GM12878 (cell line): ENCODE measurements at regions of chr1 and their contacts with region 1.

Region 1: GRCh38 chr1:150561974-150562445 is 12.8 kb downstream of the ADAMTSL4 start:
- DNase-seq: no peak
- ATAC-seq: peak; percentile 64
- H3K4me3 ChIP-seq: peak overlapping the region; percentile 80
- H3K27ac ChIP-seq: peak overlapping the region; percentile 98
- H3K4me1 ChIP-seq: peaks cover 42% of the 10 kb centered on the region
- H3K27me3 ChIP-seq: no peaks in the 10 kb centered on the region
- CTCF ChIP-seq: no peak
- EP300 ChIP-seq: no peak
- POLR2A ChIP-seq: peak; percentile 31
- RAD21 ChIP-seq: no peak

Region 2: GRCh38 chr1:150259758-150260669 is 302.0 kb before region 1 on chr1:
- CTCF ChIA-PET with region 1: interaction called, 15 read pairs
- POLR2A ChIA-PET with region 1: interaction called, 6 read pairs
- RAD21 ChIA-PET with region 1: interaction called, 3 read pairs
- SMC1A ChIA-PET with region 1: no interaction called
- in situ Hi-C with region 1: no loop called
- intact Hi-C with region 1: no loop called
- DNase-seq: no peak
- ATAC-seq: no peak
- H3K4me3 ChIP-seq: no peak overlapping the region
- H3K27ac ChIP-seq: no peak overlapping the region
- H3K4me1 ChIP-seq: peaks cover 5% of the 10 kb centered on the region; the same call in 1 of the 2 replicates
- H3K27me3 ChIP-seq: no peaks in the 10 kb centered on the region; a peak in 2 of 4 replicates
- CTCF ChIP-seq: no peak
- EP300 ChIP-seq: no peak
- POLR2A ChIP-seq: no peak
- RAD21 ChIP-seq: no peak

Region 3: GRCh38 chr1:150548632-150549495 is 13.1 kb before region 1 on chr1 and contains the start of gene ADAMTSL4:
- CTCF ChIA-PET with region 1: interaction called, 14 read pairs
- POLR2A ChIA-PET with region 1: interaction called, 6 read pairs
- RAD21 ChIA-PET with region 1: interaction called, 4 read pairs
- SMC1A ChIA-PET with region 1: interaction called, 7 read pairs
- in situ Hi-C with region 1: no loop called
- intact Hi-C with region 1: no loop called
- DNase-seq: no peak
- ATAC-seq: peak; percentile 81
- H3K4me3 ChIP-seq: peak within 1 kb of the TSS; percentile 65
- H3K27ac ChIP-seq: no peak within 1 kb of the TSS
- H3K4me1 ChIP-seq: peaks cover 3% of the 10 kb centered on the region; the same call in 1 of the 2 replicates
- H3K27me3 ChIP-seq: no peaks in the 10 kb centered on the region; a peak in 1 of 4 replicates
- CTCF ChIP-seq: no peak
- EP300 ChIP-seq: no peak
- POLR2A ChIP-seq: peak; percentile 24; the same call in 1 of the 2 replicates
- RAD21 ChIP-seq: no peak
- polyA plus RNA-seq, gene ADAMTSL4: 0.04 to 0.05 TPM

Region 4: DNA sequence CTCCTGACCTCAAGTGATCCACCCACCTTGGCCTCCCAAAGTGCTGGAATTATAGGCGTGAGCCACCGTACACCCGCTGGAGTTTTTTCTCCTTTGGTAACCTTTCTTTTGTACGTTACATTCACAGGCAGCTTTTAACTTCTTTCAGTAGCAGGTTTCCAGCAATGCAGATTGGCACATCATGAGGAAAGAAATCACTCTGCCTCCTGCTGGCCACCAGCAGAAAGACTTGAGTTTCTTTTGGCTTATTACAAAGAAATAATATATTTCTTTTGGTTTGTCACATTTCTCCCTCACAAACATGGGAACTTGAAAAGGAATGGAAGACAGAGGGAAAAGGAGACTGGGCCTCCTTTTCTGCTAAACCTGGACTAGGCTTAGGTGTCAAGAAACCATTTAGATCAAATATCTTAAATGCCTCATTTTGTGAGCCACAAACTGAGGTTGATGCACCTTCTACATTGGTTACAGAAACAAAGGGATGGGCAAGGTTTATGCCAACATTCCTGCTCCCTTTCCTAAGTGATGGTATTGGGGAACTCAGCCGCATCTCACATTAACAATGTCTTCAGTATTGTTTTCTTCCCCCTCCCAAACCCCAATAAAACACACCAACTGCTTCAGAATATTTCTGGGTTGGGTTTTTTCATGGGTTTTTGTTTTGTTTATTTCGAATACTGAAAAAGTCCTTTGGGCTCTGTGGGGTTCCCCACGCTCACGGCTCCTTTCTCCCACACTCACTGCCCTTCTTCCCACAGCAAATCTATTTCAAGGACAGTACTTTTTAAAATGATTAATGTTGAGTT is 59.7 kb after region 1 on chr1:
- CTCF ChIA-PET with region 1: interaction called, 390 read pairs
- POLR2A ChIA-PET with region 1: interaction called, 67 read pairs
- RAD21 ChIA-PET with region 1: interaction called, 149 read pairs
- SMC1A ChIA-PET with region 1: interaction called, 367 read pairs
- in situ Hi-C with region 1: no loop called
- intact Hi-C with region 1: loop called (anchors 1 kb)
- DNase-seq: no peak
- ATAC-seq: peak; percentile 62
- H3K4me3 ChIP-seq: no peak overlapping the region
- H3K27ac ChIP-seq: peak overlapping the region; percentile 67
- H3K4me1 ChIP-seq: peaks cover 26% of the 10 kb centered on the region
- H3K27me3 ChIP-seq: no peaks in the 10 kb centered on the region
- CTCF ChIP-seq: peak; percentile 57 to 74 (median 63); a peak in 5 of 6 replicates
- EP300 ChIP-seq: no peak
- POLR2A ChIP-seq: no peak
- RAD21 ChIP-seq: peak; percentile 63

Region 5: DNA sequence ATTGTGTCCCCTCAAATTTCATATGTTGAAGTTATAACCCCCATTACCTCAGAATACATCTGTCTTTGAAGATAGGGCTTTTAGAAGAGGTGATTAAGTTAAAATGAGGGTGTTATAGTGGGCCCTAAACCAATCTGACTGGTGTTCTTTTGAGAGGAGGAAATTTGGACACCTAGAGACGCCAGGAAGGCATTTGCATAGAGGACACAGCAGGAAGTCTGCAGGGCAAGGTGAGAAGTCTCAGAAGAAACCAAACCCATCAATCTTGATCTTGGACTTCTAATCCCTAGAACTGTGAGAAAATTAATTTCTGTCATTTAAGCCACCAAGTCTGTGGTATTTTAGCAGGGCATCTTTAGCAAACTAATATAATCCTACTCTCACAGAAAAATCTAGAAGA is 121.9 kb after region 1 on chr1:
- CTCF ChIA-PET with region 1: interaction called, 14 read pairs
- POLR2A ChIA-PET with region 1: no interaction called
- RAD21 ChIA-PET with region 1: interaction called, 3 read pairs
- SMC1A ChIA-PET with region 1: no interaction called
- in situ Hi-C with region 1: no loop called
- intact Hi-C with region 1: no loop called
- DNase-seq: peak; percentile 11
- ATAC-seq: peak; percentile 69
- H3K4me3 ChIP-seq: no peak overlapping the region
- H3K27ac ChIP-seq: no peak overlapping the region; the same call in 1 of the 2 replicates
- H3K4me1 ChIP-seq: peaks cover 4% of the 10 kb centered on the region
- H3K27me3 ChIP-seq: no peaks in the 10 kb centered on the region
- CTCF ChIP-seq: no peak
- EP300 ChIP-seq: no peak
- POLR2A ChIP-seq: no peak
- RAD21 ChIP-seq: no peak

Region 6: DNA sequence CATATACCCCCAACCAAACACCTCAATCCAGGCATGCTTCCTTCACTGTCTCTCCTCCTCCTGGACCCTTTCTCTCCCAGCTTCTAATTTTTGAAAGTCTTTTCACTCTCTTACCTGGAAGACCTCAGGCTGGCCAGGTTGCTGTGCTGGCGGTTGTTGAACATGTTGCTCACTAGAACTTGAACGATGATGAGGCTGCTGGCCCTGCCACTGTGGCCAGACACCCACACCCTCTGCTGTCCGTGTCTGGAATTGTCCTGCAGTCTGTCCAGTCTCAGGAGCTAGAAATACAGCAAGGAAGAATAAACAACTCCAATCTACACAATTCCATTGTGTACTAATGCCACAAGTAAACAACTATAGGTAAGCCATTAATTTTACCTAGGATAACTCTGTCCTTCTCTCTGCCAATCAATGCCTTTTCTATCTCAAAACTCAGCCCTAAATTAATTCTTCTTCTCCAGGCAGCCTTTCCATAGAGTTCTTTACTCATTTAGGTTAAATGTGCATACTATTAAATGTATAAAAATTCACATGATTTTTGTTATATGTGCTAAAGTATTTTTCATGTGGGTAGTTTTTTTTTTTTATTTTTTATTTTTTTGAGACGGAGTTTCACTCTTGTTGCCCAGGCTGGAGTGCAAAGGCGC is 251.2 kb after region 1 on chr1:
- CTCF ChIA-PET with region 1: interaction called, 15 read pairs
- POLR2A ChIA-PET with region 1: no interaction called
- RAD21 ChIA-PET with region 1: interaction called, 4 read pairs
- SMC1A ChIA-PET with region 1: interaction called, 3 read pairs
- in situ Hi-C with region 1: no loop called
- intact Hi-C with region 1: loop called (anchors 5 kb)
- DNase-seq: no peak
- ATAC-seq: peak; percentile 85
- H3K4me3 ChIP-seq: no peak overlapping the region
- H3K27ac ChIP-seq: no peak overlapping the region
- H3K4me1 ChIP-seq: no peaks in the 10 kb centered on the region
- H3K27me3 ChIP-seq: no peaks in the 10 kb centered on the region
- CTCF ChIP-seq: peak; percentile 57 to 65 (median 59)
- EP300 ChIP-seq: no peak
- POLR2A ChIP-seq: no peak
- RAD21 ChIP-seq: peak; percentile 67

Region 7: GRCh38 chr1:150995896-150996295 is 433.9 kb after region 1 on chr1:
- CTCF ChIA-PET with region 1: interaction called, 10 read pairs
- POLR2A ChIA-PET with region 1: no interaction called
- RAD21 ChIA-PET with region 1: interaction called, 4 read pairs
- SMC1A ChIA-PET with region 1: no interaction called
- in situ Hi-C with region 1: no loop called
- intact Hi-C with region 1: no loop called
- DNase-seq: no peak
- ATAC-seq: peak; percentile 68
- H3K4me3 ChIP-seq: no peak overlapping the region
- H3K27ac ChIP-seq: no peak overlapping the region
- H3K4me1 ChIP-seq: no peaks in the 10 kb centered on the region
- H3K27me3 ChIP-seq: no peaks in the 10 kb centered on the region
- CTCF ChIP-seq: peak; percentile 46 to 59 (median 50)
- EP300 ChIP-seq: no peak
- POLR2A ChIP-seq: no peak
- RAD21 ChIP-seq: peak; percentile 56